ENCODE measurements at regions of chr10 and their contacts with region 1.

Region 1: GRCh38 chr10:122388287-122388997 is 13.9 kb downstream of the PLEKHA1 start:
- DNase-seq: peak; percentile 73
- ATAC-seq: peak; percentile 87
- H3K4me3 Mint-ChIP-seq: no peak overlapping the region
- H3K27ac Mint-ChIP-seq: peak overlapping the region; percentile 86
- H3K4me1 Mint-ChIP-seq: peaks cover 48% of the 10 kb centered on the region
- H3K27me3 Mint-ChIP-seq: no peaks in the 10 kb centered on the region

Region 2: GRCh38 chr10:122348512-122348911 is 39.9 kb before region 1 on chr10:
- CTCF ChIA-PET with region 1: no interaction called
- POLR2A ChIA-PET with region 1: no interaction called
- intact Hi-C with region 1: no loop called
- DNase-seq: no peak
- ATAC-seq: no peak
- H3K4me3 Mint-ChIP-seq: no peak overlapping the region
- H3K27ac Mint-ChIP-seq: no peak overlapping the region
- H3K4me1 Mint-ChIP-seq: peaks cover 5% of the 10 kb centered on the region
- H3K27me3 Mint-ChIP-seq: no peaks in the 10 kb centered on the region

Region 3: DNA sequence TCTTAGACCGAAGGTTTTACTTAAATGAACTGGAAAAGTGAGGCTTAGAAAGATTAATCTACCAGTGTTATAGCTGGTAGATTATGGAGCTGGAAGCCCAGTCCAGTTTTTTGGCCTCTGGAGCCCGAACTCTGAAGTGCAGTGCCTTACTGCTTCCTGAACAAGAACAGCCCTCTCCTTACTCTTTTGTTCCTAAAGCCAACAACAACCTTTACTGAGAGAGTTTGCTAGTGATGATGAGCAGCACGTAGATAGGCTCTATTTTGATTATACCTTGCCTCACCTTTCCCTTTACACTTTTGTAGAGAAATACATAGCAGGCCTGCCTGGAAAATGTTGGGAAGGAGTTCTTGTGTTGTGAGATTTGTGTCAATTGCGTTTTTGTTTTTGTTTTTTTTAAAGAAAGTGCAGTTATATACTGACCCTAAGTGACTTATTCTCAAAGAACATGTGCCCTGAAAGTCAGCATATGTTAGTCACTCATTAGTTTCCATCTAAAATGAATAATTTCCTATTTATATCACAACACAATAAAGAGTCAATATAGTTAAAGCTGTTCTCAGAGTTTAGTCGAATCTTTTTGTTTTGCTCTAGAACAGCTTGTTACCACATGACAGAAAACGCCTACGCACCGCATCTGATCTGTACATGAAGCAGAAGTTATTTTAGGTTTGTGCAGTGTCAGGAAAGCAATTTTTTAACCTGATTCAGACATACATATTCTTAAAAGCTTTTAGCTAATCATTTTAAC is 19.1 kb after region 1 on chr10:
- CTCF ChIA-PET with region 1: interaction called, 9 read pairs
- POLR2A ChIA-PET with region 1: no interaction called
- intact Hi-C with region 1: loop called in 1 of 2 experiments (anchors 2 kb)
- DNase-seq: peak; percentile 80
- ATAC-seq: peak; percentile 77
- H3K4me3 Mint-ChIP-seq: no peak overlapping the region
- H3K27ac Mint-ChIP-seq: peak overlapping the region; percentile 71
- H3K4me1 Mint-ChIP-seq: peaks cover 34% of the 10 kb centered on the region
- H3K27me3 Mint-ChIP-seq: no peaks in the 10 kb centered on the region

Region 4: GRCh38 chr10:122419876-122420623 is 31.6 kb after region 1 on chr10:
- CTCF ChIA-PET with region 1: no interaction called
- POLR2A ChIA-PET with region 1: no interaction called
- intact Hi-C with region 1: loop called in 1 of 2 experiments (anchors 2 kb)
- DNase-seq: no peak
- ATAC-seq: no peak
- H3K4me3 Mint-ChIP-seq: no peak overlapping the region
- H3K27ac Mint-ChIP-seq: no peak overlapping the region
- H3K4me1 Mint-ChIP-seq: peaks cover 70% of the 10 kb centered on the region
- H3K27me3 Mint-ChIP-seq: no peaks in the 10 kb centered on the region